ENCODE measurements at regions of chr7 and their contacts with region 1.

Region 1: GRCh38 chr7:105013221-105013815 is 687 bp upstream of the KMT2E start:
- DNase-seq: peak; percentile 91 to 97 (median 94)
- ATAC-seq: peak; percentile 69
- H3K4me3 ChIP-seq: peak overlapping the region; percentile 78
- H3K27ac ChIP-seq: peak overlapping the region; percentile 98
- H3K4me1 ChIP-seq: peaks cover 17 to 30% of the 10 kb centered on the region in 2 experiments
- H3K27me3 ChIP-seq: no peaks in the 10 kb centered on the region
- CTCF ChIP-seq: peak; percentile 70 to 82 (median 74)
- EP300 ChIP-seq: peak; percentile 15; the same call in 1 of the 2 replicates
- POLR2A ChIP-seq: peak; percentile 100
- RAD21 ChIP-seq: no peak

Region 2: DNA sequence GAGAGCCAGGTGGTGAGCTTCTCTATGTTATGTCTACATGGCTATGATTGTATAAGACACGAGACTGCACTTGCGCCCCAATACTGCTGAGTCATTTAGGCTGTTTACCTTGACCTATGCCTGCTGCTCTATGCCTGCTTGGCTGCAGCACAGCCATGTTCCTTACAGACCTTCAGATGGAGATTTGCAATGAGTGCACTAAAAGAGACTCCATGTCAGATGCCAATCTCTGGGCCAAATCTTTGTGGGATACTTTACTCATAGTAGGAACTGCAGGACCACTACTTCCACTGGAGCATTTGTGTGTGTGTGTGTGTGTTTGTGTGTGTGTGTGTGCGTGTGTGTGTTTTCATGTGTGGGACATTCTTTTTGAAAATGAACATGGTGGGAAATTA is 49.3 kb before region 1 on chr7:
- CTCF ChIA-PET with region 1: no interaction called
- POLR2A ChIA-PET with region 1: interaction called, 13 read pairs
- in situ Hi-C with region 1: no loop called
- intact Hi-C with region 1: no loop called
- DNase-seq: peak in 2 of 4 experiments; percentile 46 to 76
- ATAC-seq: peak; percentile 69
- H3K4me3 ChIP-seq: no peak overlapping the region
- H3K27ac ChIP-seq: no peak overlapping the region
- H3K4me1 ChIP-seq: peaks cover 13 to 49% of the 10 kb centered on the region in 2 experiments; a peak in 4 of 5 replicates
- H3K27me3 ChIP-seq: no peaks in the 10 kb centered on the region
- CTCF ChIP-seq: no peak
- EP300 ChIP-seq: no peak
- POLR2A ChIP-seq: no peak
- RAD21 ChIP-seq: no peak

Region 3: DNA sequence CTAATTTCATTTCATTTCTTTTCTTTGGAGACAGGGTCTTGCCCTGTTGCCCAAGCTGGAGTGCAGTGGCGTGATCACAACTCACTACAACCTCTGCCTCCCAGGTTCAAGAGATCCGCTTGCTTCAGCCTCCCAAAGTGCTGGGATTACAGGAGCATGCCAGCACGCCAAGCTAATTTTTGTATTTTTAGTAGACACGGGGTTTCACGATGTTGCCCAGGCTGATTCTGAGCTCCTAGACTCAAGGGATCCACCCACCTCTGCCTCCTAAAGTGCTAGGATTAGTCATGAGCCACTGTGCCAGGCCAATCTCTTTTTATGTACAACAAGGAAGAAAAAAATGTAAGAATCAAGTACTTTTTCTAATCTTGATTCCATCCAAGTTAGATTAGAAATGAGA is 10.0 kb before region 1 on chr7:
- CTCF ChIA-PET with region 1: no interaction called
- POLR2A ChIA-PET with region 1: interaction called, 27 read pairs
- in situ Hi-C with region 1: no loop called
- intact Hi-C with region 1: no loop called
- DNase-seq: no peak
- ATAC-seq: peak; percentile 10; the same call in 2 of the 3 replicates
- H3K4me3 ChIP-seq: no peak overlapping the region
- H3K27ac ChIP-seq: peak overlapping the region; percentile 26; the same call in 1 of the 3 replicates
- H3K4me1 ChIP-seq: peaks cover 16 to 34% of the 10 kb centered on the region in 2 experiments
- H3K27me3 ChIP-seq: no peaks in the 10 kb centered on the region
- CTCF ChIP-seq: no peak
- EP300 ChIP-seq: no peak
- POLR2A ChIP-seq: 0 out of 2 replicates have a peak, but pooled peaks have one; percentile 9
- RAD21 ChIP-seq: no peak

Region 4: GRCh38 chr7:105046414-105046813 is 33.1 kb after region 1 on chr7:
- CTCF ChIA-PET with region 1: no interaction called
- POLR2A ChIA-PET with region 1: interaction called, 22 read pairs
- in situ Hi-C with region 1: no loop called
- intact Hi-C with region 1: no loop called
- DNase-seq: no peak
- ATAC-seq: no peak
- H3K4me3 ChIP-seq: no peak overlapping the region
- H3K27ac ChIP-seq: no peak overlapping the region
- H3K4me1 ChIP-seq: peaks cover 0 to 6% of the 10 kb centered on the region in 2 experiments; a peak in 2 of 5 replicates
- H3K27me3 ChIP-seq: no peaks in the 10 kb centered on the region
- CTCF ChIP-seq: no peak
- EP300 ChIP-seq: no peak
- POLR2A ChIP-seq: no peak
- RAD21 ChIP-seq: no peak

Region 5: DNA sequence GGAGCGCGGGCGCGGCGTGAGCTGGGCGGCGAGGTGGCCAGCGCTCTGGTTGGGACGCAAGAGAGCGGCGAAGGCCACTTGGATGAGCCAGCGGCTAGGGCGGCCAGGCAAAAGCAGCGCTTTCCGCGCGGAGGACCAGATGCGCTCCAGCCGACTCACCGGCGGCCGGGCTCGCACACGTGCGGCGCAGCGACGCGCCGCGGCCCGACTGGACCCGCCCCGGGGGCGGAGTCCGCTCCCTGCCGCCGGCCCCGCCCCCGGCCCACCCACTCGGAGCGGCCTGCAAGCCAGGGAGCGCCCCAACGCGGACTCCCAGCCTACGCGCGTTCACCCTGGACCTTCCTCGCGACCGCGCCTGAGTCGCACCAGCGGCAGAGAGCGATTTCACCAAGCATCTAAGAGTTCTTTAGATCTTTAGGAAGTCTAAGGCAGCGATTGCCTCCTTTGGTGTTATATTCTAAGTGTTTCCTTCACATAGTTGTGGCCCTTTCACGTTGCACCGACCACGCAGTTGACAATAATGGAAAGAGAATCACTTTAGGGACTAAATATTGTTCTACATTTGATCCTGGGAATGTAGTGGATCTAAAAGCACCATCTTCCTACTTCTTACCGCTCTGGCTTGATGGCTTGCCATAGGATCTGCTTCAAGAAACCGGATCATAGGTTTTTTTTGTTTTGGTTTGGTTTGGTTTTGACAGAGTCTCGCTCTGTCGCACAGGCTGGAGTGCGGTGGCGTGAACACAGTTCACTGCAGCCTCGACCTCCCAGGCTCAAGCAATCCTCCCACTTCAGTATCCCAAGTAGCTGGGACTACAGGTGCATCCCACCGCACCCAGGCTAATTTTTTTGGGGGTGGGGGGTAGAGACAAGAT is 509.0 kb after region 1 on chr7 and contains the start of gene PUS7:
- CTCF ChIA-PET with region 1: no interaction called
- POLR2A ChIA-PET with region 1: no interaction called
- in situ Hi-C with region 1: no loop called
- intact Hi-C with region 1: loop called (anchors 10 kb)
- DNase-seq: peak; percentile 98 to 99 (median 98)
- ATAC-seq: peak; percentile 93
- H3K4me3 ChIP-seq: peak within 1 kb of the TSS; percentile 98
- H3K27ac ChIP-seq: peak within 1 kb of the TSS; percentile 86
- H3K4me1 ChIP-seq: peaks cover 17 to 29% of the 10 kb centered on the region in 2 experiments; a peak in 3 of 5 replicates
- H3K27me3 ChIP-seq: no peaks in the 10 kb centered on the region
- CTCF ChIP-seq: peak in 2 of 3 experiments; percentile 17 to 51; a peak in 4 of 6 replicates
- EP300 ChIP-seq: no peak
- POLR2A ChIP-seq: peak; percentile 94
- RAD21 ChIP-seq: no peak
- polyA plus RNA-seq, gene PUS7: 15.1 to 17.1 TPM

Measured in K562 (cell line).